HEK293 (cell line): ENCODE measurements at regions of chr3 and their contacts with region 1.

Region 1: GRCh38 chr3:61946570-61947324 is 385.4 kb downstream of the PTPRG start:
- H3K4me3 ChIP-seq: no peak overlapping the region
- H3K27ac ChIP-seq: no peak overlapping the region
- H3K4me1 ChIP-seq: no peaks in the 10 kb centered on the region
- CTCF ChIP-seq: no peak

Region 2: DNA sequence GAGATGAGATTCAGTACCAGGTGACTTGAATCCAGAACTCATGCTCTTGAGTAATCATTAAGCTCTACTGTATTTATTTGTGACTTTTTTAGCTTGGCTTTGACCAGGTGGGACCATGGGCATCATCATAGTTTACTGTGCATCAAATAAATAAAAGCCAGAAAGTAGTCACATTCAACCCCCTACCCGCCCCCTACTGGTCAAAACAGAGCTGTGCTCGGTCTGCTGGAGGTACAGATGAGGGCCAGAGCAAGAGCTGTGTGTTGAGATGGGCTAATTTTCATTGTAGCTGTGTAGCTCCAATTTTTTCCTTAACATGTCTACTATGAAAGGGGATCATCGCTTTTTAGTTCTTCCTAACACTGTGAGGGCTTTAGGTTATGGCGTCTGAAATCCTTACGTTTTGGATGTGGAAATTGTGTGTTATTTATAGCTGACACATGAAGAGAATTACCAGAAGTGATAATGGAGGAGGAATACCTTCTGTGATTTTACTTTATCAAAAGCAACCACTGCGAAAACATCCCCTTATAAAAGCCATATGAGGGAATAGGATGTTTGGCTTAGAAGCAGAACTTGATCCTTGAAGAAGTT is 10.3 kb before region 1 on chr3:
- CTCF ChIA-PET with region 1: interaction called, 13 read pairs
- POLR2A ChIA-PET with region 1: no interaction called
- H3K4me3 ChIP-seq: no peak overlapping the region
- H3K27ac ChIP-seq: no peak overlapping the region
- H3K4me1 ChIP-seq: peaks cover 10% of the 10 kb centered on the region; the same call in 1 of the 2 replicates
- CTCF ChIP-seq: no peak

Region 3: GRCh38 chr3:62039586-62039985 is 92.8 kb after region 1 on chr3:
- CTCF ChIA-PET with region 1: no interaction called
- POLR2A ChIA-PET with region 1: no interaction called
- H3K4me3 ChIP-seq: no peak overlapping the region
- H3K27ac ChIP-seq: no peak overlapping the region
- H3K4me1 ChIP-seq: no peaks in the 10 kb centered on the region
- CTCF ChIP-seq: no peak

Region 4: DNA sequence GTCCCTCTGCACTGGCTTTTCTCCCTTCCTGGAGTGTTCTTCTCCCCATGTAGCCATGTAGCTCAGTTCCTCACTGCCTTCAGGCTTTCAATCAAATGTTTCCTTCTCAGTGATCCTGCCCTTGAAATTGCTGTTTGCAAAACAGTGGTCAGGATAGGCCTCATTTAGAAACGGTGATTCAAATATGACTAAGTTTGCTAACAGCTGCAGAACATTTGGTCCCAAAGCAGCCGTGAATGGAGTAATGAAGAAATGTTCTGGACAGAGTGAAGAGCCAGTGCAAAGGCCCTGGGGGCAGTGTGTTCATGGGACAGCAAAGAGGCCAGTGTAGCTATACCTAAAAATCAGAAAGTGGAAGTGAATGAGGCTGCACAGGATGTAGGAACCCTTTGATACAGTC is 203.2 kb after region 1 on chr3:
- CTCF ChIA-PET with region 1: no interaction called
- POLR2A ChIA-PET with region 1: no interaction called
- H3K4me3 ChIP-seq: no peak overlapping the region
- H3K27ac ChIP-seq: no peak overlapping the region
- H3K4me1 ChIP-seq: no peaks in the 10 kb centered on the region
- CTCF ChIP-seq: no peak